Naive thymus-derived CD4-positive, alpha-beta T cell (primary cell): ENCODE measurements at regions of chr7 and their contacts with region 1.

Region 1: GRCh38 chr7:104848138-104848990 is 165.6 kb upstream of the KMT2E start:
- DNase-seq: peak in 8 of 9 donors; percentile 14 to 60 (median 33)
- ATAC-seq: peak; percentile 61
- H3K4me3 ChIP-seq: no peak overlapping the region
- H3K4me3 Mint-ChIP-seq: no peak overlapping the region
- H3K27ac ChIP-seq: no peak overlapping the region
- H3K27ac Mint-ChIP-seq: no peak overlapping the region
- H3K4me1 ChIP-seq: no peaks in the 10 kb centered on the region
- H3K4me1 Mint-ChIP-seq: peaks cover 0 to 2% (median 0%) of the 10 kb centered on the region in 7 donors
- H3K27me3 ChIP-seq: no peaks in the 10 kb centered on the region
- H3K27me3 Mint-ChIP-seq: peaks cover 5 to 26% (median 12%) of the 10 kb centered on the region in 5 donors

Region 2: DNA sequence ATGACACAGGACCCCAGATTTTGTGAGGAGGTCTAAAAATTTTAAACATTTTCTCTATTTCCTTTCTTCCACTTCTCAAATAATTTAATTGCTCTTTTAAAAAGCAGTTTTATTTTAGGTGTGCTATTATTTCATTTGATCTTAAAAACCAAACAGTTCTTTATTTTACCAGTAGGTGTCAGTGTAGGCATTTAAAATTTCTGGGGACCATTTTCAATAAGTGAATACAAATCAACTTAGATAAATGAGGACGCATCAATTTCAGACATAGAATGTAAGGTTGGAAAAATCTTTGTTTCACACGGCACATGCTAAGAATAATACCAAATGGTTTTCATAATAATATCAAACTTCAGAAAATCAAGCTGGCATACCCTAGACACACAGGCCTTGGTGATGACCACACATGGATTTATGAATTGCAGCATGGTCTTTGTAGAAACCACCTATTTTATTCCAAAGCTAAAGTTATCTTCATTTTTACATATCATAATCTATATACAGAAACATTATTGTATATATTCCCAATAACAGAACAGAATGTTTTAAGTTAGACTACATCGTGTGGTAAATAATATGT is 1274.8 kb before region 1 on chr7:
- CTCF ChIA-PET with region 1: interaction called, 4 read pairs
- POLR2A ChIA-PET with region 1: no interaction called
- intact Hi-C with region 1: loop called (anchors 1 to 5 kb)
- DNase-seq: peak in 6 of 9 donors; percentile 3 to 35 (median 23)
- ATAC-seq: no peak
- H3K4me3 ChIP-seq: no peak overlapping the region
- H3K4me3 Mint-ChIP-seq: no peak overlapping the region
- H3K27ac ChIP-seq: no peak overlapping the region
- H3K27ac Mint-ChIP-seq: no peak overlapping the region
- H3K4me1 ChIP-seq: no peaks in the 10 kb centered on the region
- H3K4me1 Mint-ChIP-seq: no peaks in the 10 kb centered on the region
- H3K27me3 ChIP-seq: no peaks in the 10 kb centered on the region
- H3K27me3 Mint-ChIP-seq: peaks cover 11 to 19% (median 15%) of the 10 kb centered on the region in 5 donors

Region 3: DNA sequence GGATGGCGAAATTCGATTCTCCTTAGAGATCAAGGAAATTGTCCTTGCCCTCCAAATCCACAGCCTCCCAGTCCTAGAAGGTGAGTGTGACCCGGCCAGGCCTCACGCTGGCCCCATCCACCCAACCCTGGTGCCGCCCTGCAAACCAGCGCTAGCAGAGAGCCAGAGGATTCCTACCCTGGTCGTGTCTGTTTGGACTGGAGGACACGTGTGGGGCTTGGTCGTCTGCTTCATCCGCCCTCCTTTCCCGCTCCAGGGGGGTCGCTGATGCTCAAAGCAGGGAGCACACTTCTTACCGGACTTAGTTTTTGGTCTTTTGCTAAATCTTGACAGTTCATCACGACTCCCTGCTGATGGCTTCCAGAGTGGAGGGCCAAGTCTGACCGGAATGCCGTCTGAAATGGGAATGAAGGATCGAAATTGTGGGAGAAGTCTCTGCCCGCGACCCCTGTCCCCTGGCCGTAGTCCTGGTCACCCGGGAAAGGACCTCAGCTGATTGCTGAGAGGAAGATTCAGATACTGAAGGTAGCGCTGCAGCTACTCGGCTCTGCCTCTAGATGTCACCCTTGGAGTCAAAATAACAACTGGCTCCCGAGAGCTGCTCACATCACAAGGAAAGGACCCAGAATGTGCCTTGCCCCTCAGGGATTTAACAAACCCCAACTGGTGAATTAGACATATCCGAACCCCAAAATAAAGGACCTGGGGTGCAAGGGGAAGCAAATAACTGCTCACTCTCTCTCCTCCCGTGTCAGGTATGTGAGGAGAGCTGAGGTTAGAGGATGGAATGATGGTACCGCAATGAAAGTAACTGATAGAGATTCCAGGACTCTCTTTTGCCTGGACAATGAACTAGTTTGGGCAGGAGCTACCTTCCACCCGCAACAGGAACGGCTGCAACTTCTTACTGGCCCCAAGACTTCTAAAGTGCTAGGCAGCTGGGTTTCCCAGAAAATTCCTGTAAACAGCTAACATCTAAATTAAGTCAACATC is 617.0 kb before region 1 on chr7:
- CTCF ChIA-PET with region 1: interaction called, 10 read pairs
- POLR2A ChIA-PET with region 1: no interaction called
- intact Hi-C with region 1: loop called in 1 of 2 experiments (anchors 1 kb)
- DNase-seq: peak; percentile 10 to 46 (median 28)
- ATAC-seq: peak; percentile 86
- H3K4me3 ChIP-seq: no peak overlapping the region
- H3K4me3 Mint-ChIP-seq: no peak overlapping the region
- H3K27ac ChIP-seq: no peak overlapping the region
- H3K27ac Mint-ChIP-seq: peak overlapping the region in 1 of 9 donors; percentile 51
- H3K4me1 ChIP-seq: no peaks in the 10 kb centered on the region
- H3K4me1 Mint-ChIP-seq: peaks cover 0 to 5% (median 0%) of the 10 kb centered on the region in 7 donors
- H3K27me3 ChIP-seq: no peaks in the 10 kb centered on the region
- H3K27me3 Mint-ChIP-seq: peaks cover 16 to 37% (median 30%) of the 10 kb centered on the region in 5 donors

Region 4: GRCh38 chr7:104482362-104483037 is 365.9 kb before region 1 on chr7:
- CTCF ChIA-PET with region 1: no interaction called
- POLR2A ChIA-PET with region 1: no interaction called
- intact Hi-C with region 1: no loop called
- DNase-seq: no peak
- ATAC-seq: no peak
- H3K4me3 ChIP-seq: no peak overlapping the region
- H3K4me3 Mint-ChIP-seq: no peak overlapping the region
- H3K27ac ChIP-seq: no peak overlapping the region
- H3K27ac Mint-ChIP-seq: no peak overlapping the region
- H3K4me1 ChIP-seq: no peaks in the 10 kb centered on the region
- H3K4me1 Mint-ChIP-seq: no peaks in the 10 kb centered on the region
- H3K27me3 ChIP-seq: no peaks in the 10 kb centered on the region
- H3K27me3 Mint-ChIP-seq: peaks cover 0 to 16% (median 6%) of the 10 kb centered on the region in 5 donors

Region 5: GRCh38 chr7:104643587-104644217 is 204.7 kb before region 1 on chr7:
- CTCF ChIA-PET with region 1: no interaction called
- POLR2A ChIA-PET with region 1: no interaction called
- intact Hi-C with region 1: loop called in 1 of 2 experiments (anchors 10 kb)
- DNase-seq: no peak
- ATAC-seq: no peak
- H3K4me3 ChIP-seq: no peak overlapping the region
- H3K4me3 Mint-ChIP-seq: no peak overlapping the region
- H3K27ac ChIP-seq: no peak overlapping the region
- H3K27ac Mint-ChIP-seq: no peak overlapping the region
- H3K4me1 ChIP-seq: no peaks in the 10 kb centered on the region
- H3K4me1 Mint-ChIP-seq: no peaks in the 10 kb centered on the region
- H3K27me3 ChIP-seq: no peaks in the 10 kb centered on the region
- H3K27me3 Mint-ChIP-seq: peaks cover 0 to 36% (median 35%) of the 10 kb centered on the region in 5 donors